ENCODE measurements at regions of chr4 and their contacts with region 1.

Region 1: GRCh38 chr4:87422104-87423052 is at the start of gene NUDT9:
- DNase-seq: peak; percentile 92
- H3K4me3 Mint-ChIP-seq: peak within 1 kb of the TSS; percentile 97
- H3K27ac Mint-ChIP-seq: peak within 1 kb of the TSS; percentile 92
- H3K4me1 Mint-ChIP-seq: peaks cover 26% of the 10 kb centered on the region
- H3K27me3 Mint-ChIP-seq: no peaks in the 10 kb centered on the region
- total RNA-seq, gene NUDT9: 13.1 to 13.9 TPM

Region 2: DNA sequence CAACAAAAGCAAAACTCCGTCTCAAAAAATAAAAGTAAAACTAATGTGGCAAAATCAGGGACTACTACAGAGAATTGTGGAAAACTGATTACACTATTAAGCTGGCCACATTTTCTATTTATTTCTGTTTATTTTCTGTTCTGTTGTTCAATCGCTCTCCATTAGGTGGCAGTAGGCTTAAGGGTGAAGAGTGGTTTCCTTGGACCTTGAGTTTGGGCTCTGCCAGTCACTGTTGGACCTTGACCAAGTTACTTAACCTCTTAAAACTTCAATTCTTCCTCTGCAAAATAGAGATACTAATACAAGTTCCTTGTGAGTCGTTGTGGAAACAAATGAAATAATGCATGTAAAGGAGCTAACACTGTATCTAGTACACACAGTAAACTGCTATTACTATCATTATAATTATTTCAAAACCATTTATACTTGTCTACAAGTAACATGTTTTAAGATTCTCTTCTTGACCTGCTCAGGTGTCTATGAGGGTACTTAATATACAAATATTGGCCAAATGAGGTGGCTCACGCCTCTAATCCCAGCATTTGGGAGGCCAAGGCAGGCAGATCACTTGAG is 46.6 kb before region 1 on chr4:
- CTCF ChIA-PET with region 1: interaction called, 3 read pairs
- POLR2A ChIA-PET with region 1: interaction called, 3 read pairs
- intact Hi-C with region 1: loop called (anchors 1 kb)
- DNase-seq: no peak
- H3K4me3 Mint-ChIP-seq: no peak overlapping the region
- H3K27ac Mint-ChIP-seq: no peak overlapping the region
- H3K4me1 Mint-ChIP-seq: no peaks in the 10 kb centered on the region
- H3K27me3 Mint-ChIP-seq: no peaks in the 10 kb centered on the region

Region 3: DNA sequence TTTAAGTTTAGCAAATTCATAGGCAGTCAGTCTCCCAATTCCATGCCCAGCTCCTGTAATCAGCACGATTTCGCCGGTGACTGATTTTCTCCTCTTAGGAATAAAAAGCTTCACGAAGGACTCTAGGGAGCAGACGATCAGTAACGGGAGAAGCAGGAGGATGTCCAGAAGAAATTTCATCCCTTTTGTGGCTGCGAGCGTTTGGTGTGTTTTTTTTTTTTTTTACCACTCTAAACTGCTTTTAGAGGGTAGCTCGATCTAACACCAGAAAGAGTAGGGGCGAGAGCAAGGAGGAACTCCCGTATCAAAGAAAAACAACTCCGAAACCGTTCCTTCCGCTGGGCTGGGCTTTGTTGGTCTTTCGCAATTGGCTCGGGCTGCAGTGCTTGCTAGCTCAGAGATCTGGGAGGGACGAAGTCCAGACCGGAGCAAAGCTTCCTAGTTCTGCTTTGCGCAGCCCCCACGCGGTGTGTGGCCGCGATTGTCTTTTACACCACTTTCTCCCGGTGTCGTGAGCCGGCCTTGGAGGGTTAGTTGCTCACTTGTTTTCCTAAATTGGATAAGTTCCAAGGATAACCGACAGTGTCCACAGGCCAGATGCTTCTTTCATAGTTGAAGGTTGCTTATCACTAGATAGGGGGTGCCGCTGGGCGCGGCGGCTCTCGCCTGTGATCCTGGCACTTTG is 31.3 kb before region 1 on chr4 and contains the start of gene HSD17B11:
- CTCF ChIA-PET with region 1: interaction called, 11 read pairs
- POLR2A ChIA-PET with region 1: interaction called, 31 read pairs
- intact Hi-C with region 1: loop called (anchors 1 kb)
- DNase-seq: peak; percentile 89
- H3K4me3 Mint-ChIP-seq: peak within 1 kb of the TSS; percentile 90
- H3K27ac Mint-ChIP-seq: peak within 1 kb of the TSS; percentile 78
- H3K4me1 Mint-ChIP-seq: peaks cover 31% of the 10 kb centered on the region
- H3K27me3 Mint-ChIP-seq: no peaks in the 10 kb centered on the region
- total RNA-seq, gene HSD17B11: 19.8 to 20.8 TPM

Region 4: GRCh38 chr4:87574996-87575395 is 152.6 kb after region 1 on chr4:
- CTCF ChIA-PET with region 1: no interaction called
- POLR2A ChIA-PET with region 1: no interaction called
- intact Hi-C with region 1: no loop called
- DNase-seq: no peak
- H3K4me3 Mint-ChIP-seq: no peak overlapping the region
- H3K27ac Mint-ChIP-seq: no peak overlapping the region
- H3K4me1 Mint-ChIP-seq: no peaks in the 10 kb centered on the region
- H3K27me3 Mint-ChIP-seq: peaks cover 3% of the 10 kb centered on the region

Region 5: GRCh38 chr4:87633243-87633642 is 210.9 kb after region 1 on chr4:
- CTCF ChIA-PET with region 1: no interaction called
- POLR2A ChIA-PET with region 1: no interaction called
- intact Hi-C with region 1: no loop called
- DNase-seq: no peak
- H3K4me3 Mint-ChIP-seq: no peak overlapping the region
- H3K27ac Mint-ChIP-seq: no peak overlapping the region
- H3K4me1 Mint-ChIP-seq: no peaks in the 10 kb centered on the region
- H3K27me3 Mint-ChIP-seq: peaks cover 3% of the 10 kb centered on the region

Measured in activated CD4-positive, alpha-beta memory T cell treated with anti-CD3 and anti-CD28 coated beads for 36 hours (primary cell).